Heart left ventricle (tissue), 16 donors: ENCODE measurements at regions of chr1 and their contacts with region 1.

Region 1: DNA sequence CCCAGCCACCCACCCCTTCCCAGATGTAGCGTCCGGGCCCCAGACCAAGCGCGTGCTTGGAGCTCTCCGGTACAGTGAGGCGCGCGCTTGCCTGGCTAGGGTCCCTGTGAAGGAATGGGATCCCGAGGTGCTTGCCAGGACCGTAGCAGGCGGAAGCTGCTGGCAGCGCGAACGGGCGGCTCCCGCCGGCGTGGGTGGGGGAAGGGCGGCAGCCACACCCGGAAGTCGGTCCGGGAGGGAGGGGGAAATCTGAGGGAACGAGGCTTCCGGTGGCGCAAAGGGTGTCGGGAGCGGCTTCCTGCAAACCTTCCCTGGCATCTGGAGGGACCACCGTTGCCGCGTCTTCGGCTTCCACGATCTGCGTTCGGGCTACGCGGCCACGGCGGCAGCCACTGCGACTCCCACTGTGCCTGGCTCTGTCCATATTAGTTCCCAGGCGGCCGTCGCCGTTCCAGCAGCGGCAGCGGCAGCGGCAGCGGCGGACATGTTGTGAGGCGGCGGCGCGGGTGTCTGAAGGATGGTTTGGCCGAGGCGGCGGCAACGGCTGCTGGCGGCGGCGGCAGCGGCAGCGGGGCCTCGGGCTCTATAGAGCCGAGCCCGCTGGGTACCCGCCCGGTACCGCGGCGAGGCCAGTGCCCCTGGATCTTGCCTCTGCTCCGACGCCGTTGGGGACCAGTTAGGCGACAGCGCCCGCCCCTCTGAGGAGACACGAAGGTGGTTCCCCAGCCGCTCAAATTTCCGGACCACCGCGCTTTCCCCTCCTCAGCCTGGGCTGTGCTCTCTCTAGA is at the start of gene DR1:
- DNase-seq: peak; percentile 96 to 97 (median 96)
- ATAC-seq: peak; percentile 94 to 98 (median 98)
- H3K4me3 ChIP-seq: peak within 1 kb of the TSS; percentile 65 to 98 (median 92)
- H3K27ac ChIP-seq: peak within 1 kb of the TSS; percentile 82 to 98 (median 94)
- H3K4me1 ChIP-seq: peaks cover 0 to 38% (median 28%) of the 10 kb centered on the region in 12 donors
- H3K27me3 ChIP-seq: no peaks in the 10 kb centered on the region
- CTCF ChIP-seq: no peak
- POLR2A ChIP-seq: peak in 1 of 2 donors; percentile 71
- total RNA-seq, gene DR1: 21.6 to 45.1 (median 37.8) TPM

Region 2: GRCh38 chr1:93078986-93079654 is 266.7 kb before region 1 on chr1 and contains the start of gene MTF2:
- intact Hi-C with region 1: loop called in 1 of 10 experiments (anchors 5 kb)
- DNase-seq: peak; percentile 96 to 98 (median 97)
- ATAC-seq: peak; percentile 95 to 98 (median 97)
- H3K4me3 ChIP-seq: peak within 1 kb of the TSS; percentile 61 to 96 (median 84)
- H3K27ac ChIP-seq: peak within 1 kb of the TSS; percentile 54 to 91 (median 82)
- H3K4me1 ChIP-seq: peaks cover 0 to 50% (median 22%) of the 10 kb centered on the region in 12 donors
- H3K27me3 ChIP-seq: no peaks in the 10 kb centered on the region
- CTCF ChIP-seq: no peak
- POLR2A ChIP-seq: peak in 1 of 2 donors; percentile 75
- total RNA-seq, gene MTF2: 4.8 to 11.4 (median 8.0) TPM

Region 3: DNA sequence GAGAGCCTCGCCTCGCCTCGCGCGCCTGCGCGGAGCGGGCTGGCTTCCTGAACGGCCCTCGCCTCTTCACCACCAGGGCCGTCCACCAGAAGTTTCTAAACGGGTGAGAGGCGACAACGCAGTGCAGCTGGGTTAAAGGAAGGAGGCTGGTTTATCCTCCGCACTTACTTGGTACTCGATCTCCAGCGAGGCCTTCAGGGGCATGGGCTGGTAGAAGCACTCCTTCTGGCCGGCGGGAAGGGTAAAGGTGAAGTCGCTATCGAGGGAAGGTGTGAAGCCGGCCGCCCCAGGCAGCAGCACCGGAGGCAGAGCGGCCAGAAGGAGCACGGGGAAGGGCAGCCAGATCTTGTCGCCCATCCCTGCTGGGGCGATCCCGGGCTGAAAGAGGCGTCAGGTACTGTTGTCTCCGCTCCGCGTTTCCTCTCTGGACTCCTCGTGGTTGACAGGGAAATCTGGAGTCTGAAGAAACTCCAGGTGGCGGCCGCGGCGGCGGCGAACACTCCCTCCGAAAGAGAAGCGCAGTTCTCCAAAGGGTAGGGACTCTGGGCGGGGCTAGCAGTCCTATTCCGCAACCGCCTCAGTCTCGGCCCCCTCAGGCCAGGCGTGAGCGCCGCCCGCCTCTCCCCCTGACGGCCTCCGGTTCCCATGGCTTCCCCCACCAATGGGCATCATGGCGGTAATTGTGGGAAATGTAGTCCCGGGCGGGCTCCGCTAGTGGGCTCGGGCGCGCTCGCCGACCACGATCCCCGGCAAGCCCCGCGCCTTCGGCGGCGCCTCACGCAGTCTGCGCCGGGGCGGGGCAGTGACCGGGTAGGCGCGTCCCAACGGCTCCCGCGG is 165.7 kb before region 1 on chr1 and contains the start of gene TMED5:
- intact Hi-C with region 1: loop called in 2 of 10 experiments (anchors 5 kb)
- DNase-seq: peak; percentile 98 to 99 (median 98)
- ATAC-seq: peak; percentile 98 to 99 (median 99)
- H3K4me3 ChIP-seq: peak within 1 kb of the TSS; percentile 63 to 98 (median 76)
- H3K27ac ChIP-seq: peak within 1 kb of the TSS; percentile 96 to 100 (median 98)
- H3K4me1 ChIP-seq: peaks cover 0 to 42% (median 25%) of the 10 kb centered on the region in 12 donors
- H3K27me3 ChIP-seq: no peaks in the 10 kb centered on the region
- CTCF ChIP-seq: peak in 7 of 12 donors; percentile 11 to 33 (median 24)
- POLR2A ChIP-seq: peak; percentile 48 to 94
- total RNA-seq, gene TMED5: 36.5 to 95.3 (median 55.0) TPM

Region 4: DNA sequence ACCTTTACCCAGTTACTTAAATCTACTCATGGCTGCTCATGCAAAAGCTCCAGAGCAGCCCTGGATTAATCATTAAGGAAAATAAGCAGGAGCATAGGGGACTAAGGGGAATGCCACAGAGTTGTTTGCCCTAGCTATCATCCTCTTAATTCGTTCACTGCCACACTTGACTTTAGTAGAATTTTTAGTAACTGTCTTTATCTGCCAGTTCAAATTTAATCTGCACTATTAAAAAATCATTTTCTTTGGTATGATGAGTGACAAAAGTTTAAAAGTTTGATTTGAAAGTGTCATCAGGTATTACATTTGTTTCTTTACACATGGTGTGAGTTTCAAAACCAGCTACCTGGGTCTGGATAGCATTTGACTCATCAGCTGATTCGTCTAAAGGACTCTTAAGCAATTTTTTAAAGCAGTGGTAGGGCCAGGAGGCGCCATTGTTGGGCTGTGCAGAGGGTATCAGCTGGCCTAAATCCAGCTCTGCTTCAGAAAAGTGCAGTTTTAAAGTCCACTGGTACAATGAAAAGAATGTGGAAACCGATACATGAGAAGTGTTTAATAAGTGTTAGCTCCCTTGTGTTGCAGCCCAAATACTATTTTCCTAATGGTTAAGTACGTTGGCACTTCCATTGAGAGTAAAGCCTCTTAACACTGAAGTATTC is 70.1 kb before region 1 on chr1:
- intact Hi-C with region 1: no loop called
- DNase-seq: no peak
- ATAC-seq: no peak
- H3K4me3 ChIP-seq: no peak overlapping the region
- H3K27ac ChIP-seq: no peak overlapping the region
- H3K4me1 ChIP-seq: no peaks in the 10 kb centered on the region
- H3K27me3 ChIP-seq: no peaks in the 10 kb centered on the region
- CTCF ChIP-seq: no peak
- POLR2A ChIP-seq: no peak

Region 5: DNA sequence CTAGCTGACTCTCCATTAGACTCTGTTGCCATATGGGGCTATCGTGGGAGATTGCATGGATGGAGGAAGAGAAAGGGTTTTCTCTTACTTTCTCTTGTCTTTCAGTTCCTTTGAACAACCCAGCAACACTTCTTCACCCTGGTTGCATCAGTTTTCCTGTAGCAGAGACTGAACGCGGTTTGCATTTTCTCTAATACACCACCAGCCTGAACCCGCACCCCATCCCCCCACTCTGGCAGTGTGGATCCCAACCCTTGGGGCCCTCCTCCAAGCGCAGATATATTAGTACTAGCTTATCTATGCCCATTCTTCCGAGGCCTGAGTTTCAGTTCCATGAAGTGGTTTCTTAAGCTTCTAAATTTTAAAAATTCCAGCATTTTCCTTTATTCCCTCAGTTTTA is 12.5 kb after region 1 on chr1:
- intact Hi-C with region 1: no loop called
- DNase-seq: no peak
- ATAC-seq: peak in 1 of 4 donors; percentile 49
- H3K4me3 ChIP-seq: no peak overlapping the region
- H3K27ac ChIP-seq: peak overlapping the region in 1 of 12 donors; percentile 15
- H3K4me1 ChIP-seq: peaks cover 0 to 76% (median 21%) of the 10 kb centered on the region in 12 donors
- H3K27me3 ChIP-seq: no peaks in the 10 kb centered on the region
- CTCF ChIP-seq: no peak
- POLR2A ChIP-seq: no peak

Region 6: GRCh38 chr1:93537924-93538323 is 192.1 kb after region 1 on chr1:
- intact Hi-C with region 1: loop called in 1 of 10 experiments (anchors 10 kb)
- DNase-seq: no peak
- ATAC-seq: no peak
- H3K4me3 ChIP-seq: no peak overlapping the region
- H3K27ac ChIP-seq: no peak overlapping the region
- H3K4me1 ChIP-seq: peaks cover 0 to 9% (median 0%) of the 10 kb centered on the region in 12 donors
- H3K27me3 ChIP-seq: no peaks in the 10 kb centered on the region
- CTCF ChIP-seq: no peak
- POLR2A ChIP-seq: no peak

Region 7: DNA sequence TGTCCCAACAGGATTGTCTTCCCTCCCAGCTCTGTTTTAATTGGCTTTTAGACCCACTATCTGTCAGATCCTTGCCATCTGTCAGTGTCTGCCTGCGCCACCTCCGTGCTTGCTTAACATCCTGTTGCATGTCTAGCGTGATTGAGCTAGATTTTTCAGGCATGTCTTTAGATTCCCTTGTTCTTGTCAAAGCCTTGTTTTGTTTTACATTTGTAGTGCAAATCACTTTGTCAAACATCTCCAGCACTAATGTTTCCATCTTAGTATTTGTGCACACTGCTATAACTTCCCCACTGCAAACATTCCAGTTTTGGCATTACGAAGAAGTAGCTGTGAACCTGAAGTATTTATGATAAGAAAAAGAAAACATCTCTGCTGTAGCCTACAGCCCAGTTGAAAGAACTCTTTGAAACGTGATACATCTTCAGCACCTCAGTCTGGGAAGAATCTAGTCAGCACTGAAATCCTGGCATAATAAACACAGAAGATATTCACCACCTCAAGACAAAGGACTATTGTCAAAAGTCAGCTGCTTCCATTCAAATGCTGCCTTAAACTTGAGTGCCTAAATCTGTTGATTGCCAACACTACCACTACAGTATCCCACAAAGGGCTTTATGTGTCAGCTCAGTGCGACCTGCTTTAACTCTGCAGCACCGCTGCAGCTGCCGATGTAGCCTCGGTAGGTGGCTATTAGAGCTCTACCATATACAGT is 207.1 kb after region 1 on chr1:
- intact Hi-C with region 1: loop called in 1 of 10 experiments (anchors 10 kb)
- DNase-seq: peak in 2 of 5 donors; percentile 51 to 58
- ATAC-seq: peak; percentile 38 to 64 (median 48)
- H3K4me3 ChIP-seq: no peak overlapping the region
- H3K27ac ChIP-seq: peak overlapping the region; percentile 38 to 72 (median 64)
- H3K4me1 ChIP-seq: peaks cover 15 to 45% (median 35%) of the 10 kb centered on the region in 12 donors
- H3K27me3 ChIP-seq: no peaks in the 10 kb centered on the region
- CTCF ChIP-seq: no peak
- POLR2A ChIP-seq: no peak

Region 8: GRCh38 chr1:93567255-93567918 is 221.6 kb after region 1 on chr1:
- intact Hi-C with region 1: no loop called
- DNase-seq: peak in 1 of 5 donors; percentile 74
- ATAC-seq: peak; percentile 62 to 85 (median 76)
- H3K4me3 ChIP-seq: no peak overlapping the region
- H3K27ac ChIP-seq: peak overlapping the region in 10 of 12 donors; percentile 24 to 76 (median 56)
- H3K4me1 ChIP-seq: peaks cover 8 to 28% (median 16%) of the 10 kb centered on the region in 12 donors
- H3K27me3 ChIP-seq: no peaks in the 10 kb centered on the region
- CTCF ChIP-seq: no peak
- POLR2A ChIP-seq: no peak

Region 9: GRCh38 chr1:93846211-93846991 is 500.6 kb after region 1 on chr1:
- intact Hi-C with region 1: loop called in 2 of 10 experiments (anchors 2 to 5 kb)
- DNase-seq: peak; percentile 89 to 93 (median 90)
- ATAC-seq: peak; percentile 49 to 78 (median 74)
- H3K4me3 ChIP-seq: peak overlapping the region; percentile 79 to 93 (median 86)
- H3K27ac ChIP-seq: peak overlapping the region; percentile 87 to 99 (median 98)
- H3K4me1 ChIP-seq: peaks cover 0 to 34% (median 22%) of the 10 kb centered on the region in 12 donors
- H3K27me3 ChIP-seq: no peaks in the 10 kb centered on the region
- CTCF ChIP-seq: peak in 9 of 12 donors; percentile 17 to 59 (median 39)
- POLR2A ChIP-seq: peak in 1 of 2 donors; percentile 47